GM10248 (cell line): ENCODE measurements at regions of chr19 and their contacts with region 1.

Region 1: GRCh38 chr19:10565567-10566407 is at the start of gene KRI1:
- DNase-seq: peak; percentile 98
- CTCF ChIP-seq: no peak

Region 2: DNA sequence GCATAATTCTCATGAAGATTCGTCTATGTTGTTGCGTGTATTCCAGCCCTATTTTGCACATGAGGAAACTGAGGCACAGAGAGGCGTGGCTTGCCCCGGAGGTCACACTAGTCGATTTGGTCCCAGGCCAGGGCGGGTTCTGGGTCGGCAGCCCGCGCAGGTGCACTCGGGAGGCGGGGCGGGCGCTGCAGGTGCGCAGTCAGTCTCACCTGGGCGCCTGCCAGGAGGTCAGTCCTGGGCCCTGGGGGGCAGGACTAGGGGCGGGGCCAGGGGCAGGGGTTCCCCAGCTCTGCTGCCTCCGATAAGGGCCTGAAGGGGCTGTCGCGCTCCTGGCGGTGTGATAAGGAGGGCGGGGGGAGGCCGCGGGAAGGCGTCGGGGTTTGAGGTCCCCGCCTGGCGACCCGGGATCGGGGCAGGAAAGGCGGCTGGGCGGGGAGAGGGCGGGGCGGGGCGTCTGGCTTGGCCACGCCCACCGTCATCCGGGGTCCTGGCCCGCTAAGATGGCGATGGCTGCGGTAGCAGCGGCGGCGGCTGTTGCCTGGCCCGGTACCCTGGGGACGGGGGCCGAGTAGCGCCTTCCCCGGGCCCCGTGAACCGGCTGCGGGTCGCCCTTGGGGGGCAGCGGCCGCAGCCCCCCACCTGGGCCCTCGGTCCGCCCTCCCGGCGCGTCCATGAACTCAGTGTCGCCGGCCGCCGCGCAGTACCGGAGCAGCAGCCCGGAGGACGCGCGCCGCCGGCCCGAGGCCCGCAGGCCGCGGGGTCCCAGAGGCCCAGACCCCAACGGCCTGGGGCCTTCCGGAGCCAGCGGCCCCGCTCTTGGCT is 22.2 kb before region 1 on chr19 and contains the start of gene ATG4D:
- CTCF ChIA-PET with region 1: interaction called, 11 read pairs
- POLR2A ChIA-PET with region 1: no interaction called
- DNase-seq: peak; percentile 97
- CTCF ChIP-seq: no peak

Region 3: DNA sequence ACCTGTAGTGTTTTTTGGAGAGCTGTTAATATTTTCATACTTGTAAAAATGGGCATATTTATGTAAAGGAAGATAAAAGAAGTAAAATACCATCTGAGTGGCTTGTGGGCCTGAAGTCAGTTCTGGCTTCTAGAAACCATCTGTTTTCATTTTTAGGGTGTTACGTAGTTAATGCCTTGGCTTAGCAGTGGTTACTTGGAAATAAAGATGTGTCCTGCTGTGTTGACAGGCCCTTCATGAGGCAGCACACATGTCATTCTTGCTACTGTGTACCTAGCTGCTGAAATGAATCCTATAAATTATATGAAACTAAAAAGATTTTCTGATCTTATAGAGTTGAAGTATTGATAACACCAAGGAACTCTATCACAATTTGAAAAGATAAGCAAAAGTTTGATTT is 104.4 kb after region 1 on chr19:
- CTCF ChIA-PET with region 1: no interaction called
- POLR2A ChIA-PET with region 1: no interaction called
- DNase-seq: no peak
- CTCF ChIP-seq: no peak